ENCODE measurements at regions of chr6 and their contacts with region 1.

Region 1: GRCh38 chr6:168451805-168452517 is 11.0 kb downstream of the SMOC2 start:
- DNase-seq: no peak
- ATAC-seq: peak; percentile 53
- H3K4me3 ChIP-seq: no peak overlapping the region
- H3K27ac ChIP-seq: peak overlapping the region; percentile 90
- H3K4me1 ChIP-seq: peaks cover 2 to 12% of the 10 kb centered on the region in 2 donors
- H3K27me3 ChIP-seq: no peaks in the 10 kb centered on the region

Region 2: GRCh38 chr6:168440520-168441433 is 11.2 kb before region 1 on chr6 and contains the start of gene SMOC2:
- intact Hi-C with region 1: loop called in 1 of 2 experiments (anchors 1 kb)
- DNase-seq: peak; percentile 76 to 86
- ATAC-seq: peak; percentile 74
- H3K4me3 ChIP-seq: peak within 1 kb of the TSS; percentile 58 to 88
- H3K27ac ChIP-seq: peak within 1 kb of the TSS; percentile 30 to 36
- H3K4me1 ChIP-seq: peaks cover 2% of the 10 kb centered on the region in 2 donors
- H3K27me3 ChIP-seq: no peaks in the 10 kb centered on the region
- total RNA-seq, gene SMOC2: 203 to 369 TPM

Region 3: GRCh38 chr6:168526841-168527281 is 74.9 kb after region 1 on chr6:
- intact Hi-C with region 1: loop called in 1 of 2 experiments (anchors 5 kb)
- DNase-seq: peak; percentile 61 to 78
- ATAC-seq: peak; percentile 83
- H3K4me3 ChIP-seq: no peak overlapping the region
- H3K27ac ChIP-seq: peak overlapping the region; percentile 57 to 63
- H3K4me1 ChIP-seq: peaks cover 2 to 3% of the 10 kb centered on the region in 2 donors
- H3K27me3 ChIP-seq: no peaks in the 10 kb centered on the region

Region 4: GRCh38 chr6:168542301-168542700 is 90.3 kb after region 1 on chr6:
- intact Hi-C with region 1: loop called in 1 of 2 experiments (anchors 5 kb)
- DNase-seq: no peak
- ATAC-seq: peak; percentile 31
- H3K4me3 ChIP-seq: no peak overlapping the region
- H3K27ac ChIP-seq: peak overlapping the region; percentile 50 to 93
- H3K4me1 ChIP-seq: peaks cover 0 to 4% of the 10 kb centered on the region in 2 donors
- H3K27me3 ChIP-seq: no peaks in the 10 kb centered on the region

Measured in aorta (tissue), 5 donors.